ENCODE measurements at regions of chr17 and their contacts with region 1.

Region 1: DNA sequence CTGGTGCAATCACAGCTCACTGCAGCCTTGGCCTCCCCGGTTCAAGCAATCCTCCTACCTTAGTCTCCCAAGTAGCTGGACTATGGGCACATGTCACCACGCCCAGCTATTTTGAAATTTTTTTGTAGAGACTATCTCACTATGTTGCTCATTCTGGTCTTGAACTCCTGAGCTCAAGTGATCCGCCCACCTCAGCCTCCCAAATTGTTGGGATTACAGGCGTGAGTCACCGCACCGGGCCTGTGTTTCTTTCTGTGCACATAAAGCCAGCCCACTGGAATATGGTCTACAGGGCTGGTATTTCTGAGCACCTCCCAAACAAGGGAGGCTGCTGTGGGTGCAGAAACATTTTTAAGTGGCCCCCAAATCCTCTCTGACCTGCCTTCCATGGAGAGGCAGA is 8.4 kb downstream of the TMEM95 start:
- DNase-seq: no peak
- ATAC-seq: no peak
- H3K4me3 ChIP-seq: no peak overlapping the region
- H3K27ac ChIP-seq: no peak overlapping the region
- H3K4me1 ChIP-seq: no peaks in the 10 kb centered on the region
- H3K27me3 ChIP-seq: no peaks in the 10 kb centered on the region
- CTCF ChIP-seq: no peak
- EP300 ChIP-seq: no peak
- POLR2A ChIP-seq: no peak
- RAD21 ChIP-seq: no peak

Region 2: GRCh38 chr17:7374353-7374752 is 11.0 kb after region 1 on chr17:
- CTCF ChIA-PET with region 1: interaction called, 15 read pairs
- POLR2A ChIA-PET with region 1: no interaction called
- RAD21 ChIA-PET with region 1: no interaction called
- SMC1A ChIA-PET with region 1: no interaction called
- in situ Hi-C with region 1: no loop called
- intact Hi-C with region 1: no loop called
- DNase-seq: no peak
- ATAC-seq: no peak
- H3K4me3 ChIP-seq: no peak overlapping the region
- H3K27ac ChIP-seq: no peak overlapping the region
- H3K4me1 ChIP-seq: no peaks in the 10 kb centered on the region
- H3K27me3 ChIP-seq: no peaks in the 10 kb centered on the region
- CTCF ChIP-seq: no peak
- EP300 ChIP-seq: no peak
- POLR2A ChIP-seq: no peak
- RAD21 ChIP-seq: no peak

Measured in GM12878 (cell line).